Activated CD4-positive, alpha-beta T cell treated with anti-CD3 and anti-CD28 coated beads, Interleukin-2, amount 10 ng/mL, durations not matched to agents 24 days and 14 days (primary cell): ENCODE measurements at regions of chr20 and their contacts with region 1.

Region 1: GRCh38 chr20:46689082-46689754 is at the start of gene TP53RK:
- DNase-seq: peak; percentile 99
- H3K4me3 Mint-ChIP-seq: peak within 1 kb of the TSS; percentile 98
- H3K27ac Mint-ChIP-seq: peak within 1 kb of the TSS; percentile 97
- H3K4me1 Mint-ChIP-seq: peaks cover 39% of the 10 kb centered on the region
- H3K27me3 Mint-ChIP-seq: peaks cover 2% of the 10 kb centered on the region
- total RNA-seq, gene TP53RK: 15.5 and 16.5 TPM in 2 replicates

Region 2: GRCh38 chr20:46307139-46307998 is 381.8 kb before region 1 on chr20:
- intact Hi-C with region 1: loop called (anchors 5 kb)
- DNase-seq: peak; percentile 90
- H3K4me3 Mint-ChIP-seq: no peak overlapping the region
- H3K27ac Mint-ChIP-seq: no peak overlapping the region
- H3K4me1 Mint-ChIP-seq: peaks cover 4% of the 10 kb centered on the region
- H3K27me3 Mint-ChIP-seq: peaks cover 75% of the 10 kb centered on the region

Region 3: GRCh38 chr20:46406199-46406985 is 282.8 kb before region 1 on chr20 and contains the start of gene ELMO2:
- intact Hi-C with region 1: loop called (anchors 2 kb)
- DNase-seq: peak; percentile 99
- H3K4me3 Mint-ChIP-seq: peak within 1 kb of the TSS; percentile 88
- H3K27ac Mint-ChIP-seq: peak within 1 kb of the TSS; percentile 96
- H3K4me1 Mint-ChIP-seq: peaks cover 58% of the 10 kb centered on the region
- H3K27me3 Mint-ChIP-seq: peaks cover 2% of the 10 kb centered on the region
- total RNA-seq, gene ELMO2: 64.5 and 66.4 TPM in 2 replicates

Region 4: GRCh38 chr20:46485431-46485830 is 203.8 kb before region 1 on chr20:
- intact Hi-C with region 1: no loop called
- DNase-seq: no peak
- H3K4me3 Mint-ChIP-seq: no peak overlapping the region
- H3K27ac Mint-ChIP-seq: no peak overlapping the region
- H3K4me1 Mint-ChIP-seq: peaks cover 4% of the 10 kb centered on the region
- H3K27me3 Mint-ChIP-seq: peaks cover 44% of the 10 kb centered on the region

Region 5: DNA sequence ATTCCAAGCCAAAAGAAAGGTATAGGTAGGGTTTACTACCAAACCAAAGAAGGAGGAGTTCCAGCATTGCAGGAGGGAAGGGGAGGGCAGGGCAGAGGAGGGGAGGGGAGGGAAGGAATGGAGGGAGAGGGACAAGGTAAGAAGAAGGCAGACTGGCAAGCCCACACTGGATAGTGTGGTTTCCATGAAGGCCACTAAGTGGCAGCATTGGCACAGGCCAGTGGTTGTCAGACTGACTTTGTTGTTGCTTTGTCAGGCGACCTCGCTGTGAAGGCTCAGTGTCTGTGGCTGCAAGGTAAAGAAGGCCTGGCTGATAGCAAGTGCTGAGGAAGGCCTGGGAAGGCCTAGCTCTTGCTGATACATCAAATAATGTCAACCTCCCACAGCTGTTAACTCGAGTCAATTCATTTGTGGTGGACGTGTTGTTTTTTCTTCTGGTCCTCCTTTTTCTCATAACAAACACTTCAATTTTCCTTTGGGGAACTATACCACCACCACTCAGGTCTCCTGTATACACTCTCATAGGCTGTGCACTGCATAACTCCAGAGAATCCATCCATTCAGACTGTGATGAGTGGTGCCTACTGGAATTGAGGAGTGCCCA is 168.1 kb before region 1 on chr20:
- intact Hi-C with region 1: loop called (anchors 2 kb)
- DNase-seq: peak; percentile 87
- H3K4me3 Mint-ChIP-seq: no peak overlapping the region
- H3K27ac Mint-ChIP-seq: no peak overlapping the region
- H3K4me1 Mint-ChIP-seq: no peaks in the 10 kb centered on the region
- H3K27me3 Mint-ChIP-seq: peaks cover 14% of the 10 kb centered on the region

Region 6: DNA sequence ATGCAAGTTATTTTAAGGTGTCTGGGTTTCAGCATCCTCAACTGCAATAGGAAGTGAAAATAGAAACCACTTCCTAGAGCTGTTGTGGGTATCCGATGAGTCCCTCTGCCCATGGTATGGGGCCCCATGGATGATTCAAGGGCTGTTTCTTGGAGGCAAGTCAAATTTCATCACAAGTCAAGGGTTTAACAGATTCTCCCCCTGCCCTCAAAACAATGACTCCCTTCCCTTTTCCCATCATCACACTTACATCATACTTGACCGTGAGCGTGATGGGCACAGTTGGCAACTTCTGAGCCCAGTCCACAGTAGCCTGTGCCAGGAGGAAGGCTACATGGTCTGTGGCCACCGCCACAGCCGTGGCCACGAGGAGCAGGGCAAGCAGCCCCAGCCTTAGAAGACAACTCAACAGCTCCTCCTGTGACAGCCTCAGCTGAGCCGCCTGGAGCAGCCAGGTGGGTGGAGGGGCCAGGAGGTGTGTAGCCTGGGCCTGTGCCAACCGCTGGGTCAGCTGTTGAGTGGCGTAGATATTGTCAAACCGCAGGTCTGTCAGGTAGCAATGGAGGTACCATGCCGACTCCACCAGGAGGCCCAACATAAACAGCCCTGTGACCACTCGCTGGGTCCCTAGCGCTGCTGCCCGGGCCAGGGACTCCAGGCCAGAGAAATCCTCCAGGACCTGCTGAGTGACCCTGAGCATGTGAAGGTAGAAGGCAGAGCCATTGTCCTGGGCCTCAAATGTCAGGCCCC is 144.0 kb before region 1 on chr20:
- intact Hi-C with region 1: loop called (anchors 2 kb)
- DNase-seq: peak; percentile 84
- H3K4me3 Mint-ChIP-seq: peak overlapping the region; percentile 73
- H3K27ac Mint-ChIP-seq: peak overlapping the region; percentile 95
- H3K4me1 Mint-ChIP-seq: peaks cover 23% of the 10 kb centered on the region
- H3K27me3 Mint-ChIP-seq: peaks cover 2% of the 10 kb centered on the region

Region 7: DNA sequence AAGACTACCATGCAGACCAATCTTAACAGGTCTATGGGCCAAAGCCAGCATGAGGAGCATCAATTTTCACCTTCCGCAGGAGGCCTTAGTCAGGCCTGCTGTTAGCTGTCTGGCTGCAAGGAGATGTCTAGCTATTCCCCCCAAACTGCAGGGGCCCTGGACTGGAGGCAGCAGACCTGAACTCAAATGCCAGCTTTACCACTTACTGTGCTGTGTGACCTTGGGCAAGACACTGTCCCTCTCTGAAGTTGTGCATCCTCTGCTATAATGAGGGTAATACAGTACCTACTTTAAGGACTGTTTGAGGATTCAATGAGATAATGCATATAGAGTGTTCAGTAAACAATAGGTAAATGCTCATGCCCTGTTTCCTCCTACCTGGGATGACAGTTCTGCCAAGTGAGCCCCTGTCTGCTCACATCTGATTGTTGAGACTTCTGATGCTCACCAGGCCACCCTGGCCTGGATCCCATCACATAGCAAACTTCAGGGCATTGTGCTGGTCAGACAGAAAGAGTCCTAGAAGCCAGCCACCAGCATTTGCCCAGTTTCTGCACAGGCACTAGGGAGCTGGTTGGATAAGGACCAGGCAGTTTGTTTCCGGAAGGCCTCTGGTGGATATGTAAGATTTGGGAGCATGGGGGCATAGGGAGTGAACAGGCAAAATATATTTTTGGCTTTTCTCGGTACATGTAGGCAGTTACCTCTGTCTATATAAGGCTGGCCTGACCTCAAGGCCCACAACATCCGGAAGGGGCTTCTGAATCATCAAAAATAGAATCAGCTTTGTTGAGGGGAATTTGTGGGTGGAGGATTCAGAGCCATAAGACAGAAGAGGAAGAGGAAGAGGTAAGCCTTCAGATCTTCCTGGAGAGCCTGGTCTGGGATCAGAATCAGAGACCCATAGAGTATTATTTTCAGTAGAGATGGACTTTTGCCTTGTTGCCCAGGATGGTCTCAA is 136.5 kb before region 1 on chr20:
- intact Hi-C with region 1: loop called (anchors 2 kb)
- DNase-seq: peak; percentile 88
- H3K4me3 Mint-ChIP-seq: peak overlapping the region; percentile 79
- H3K27ac Mint-ChIP-seq: peak overlapping the region; percentile 94
- H3K4me1 Mint-ChIP-seq: peaks cover 57% of the 10 kb centered on the region
- H3K27me3 Mint-ChIP-seq: no peaks in the 10 kb centered on the region

Region 8: DNA sequence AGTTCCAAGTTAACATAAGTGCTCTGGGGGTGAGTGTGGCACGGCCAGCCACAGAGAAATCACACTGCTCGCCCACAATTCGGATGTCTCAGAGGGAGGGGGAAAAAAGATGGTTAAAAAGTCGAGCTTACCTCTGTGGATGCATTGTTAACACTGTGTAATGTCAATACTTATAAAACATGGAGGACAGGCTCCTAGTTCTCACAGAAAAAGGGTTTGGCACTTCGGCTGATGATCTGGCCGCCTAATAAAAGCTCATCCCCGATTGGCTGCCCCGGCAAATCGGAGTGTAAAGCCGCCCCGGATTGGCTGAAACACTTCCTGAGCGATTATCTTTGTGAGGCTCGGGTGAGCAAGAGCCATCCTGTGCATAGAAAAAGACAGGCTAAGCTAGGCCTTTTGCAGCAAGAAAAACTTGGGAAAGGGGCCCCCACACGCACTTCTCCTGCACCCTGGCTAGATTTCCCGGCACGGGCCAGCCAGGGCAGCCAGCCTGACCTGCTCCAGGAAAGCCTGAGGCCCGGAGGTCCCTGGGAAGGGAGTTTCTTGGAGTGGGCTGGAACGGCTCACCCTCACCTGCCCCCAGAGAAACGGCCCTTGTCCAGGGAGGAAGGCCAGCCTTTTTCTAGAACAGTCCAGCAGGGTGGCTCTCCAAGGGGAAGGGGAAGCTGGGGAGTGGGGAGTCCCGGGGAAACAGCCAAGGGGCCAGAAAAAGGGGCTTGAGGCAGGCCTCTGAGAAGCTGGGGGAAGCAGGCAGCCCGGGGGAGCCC is 667.5 kb after region 1 on chr20 and contains the start of gene ZMYND8:
- intact Hi-C with region 1: loop called (anchors 5 kb)
- DNase-seq: peak; percentile 99
- H3K4me3 Mint-ChIP-seq: peak within 1 kb of the TSS; percentile 91
- H3K27ac Mint-ChIP-seq: peak within 1 kb of the TSS; percentile 99
- H3K4me1 Mint-ChIP-seq: peaks cover 30% of the 10 kb centered on the region
- H3K27me3 Mint-ChIP-seq: no peaks in the 10 kb centered on the region
- total RNA-seq, gene ZMYND8: 38.1 and 40.0 TPM in 2 replicates